PC-3 (cell line): ENCODE measurements at regions of chrX and their contacts with region 1.

Region 1: GRCh38 chrX:135484641-135485289 is 35.7 kb upstream of the INTS6L start:
- DNase-seq: peak; percentile 55
- ATAC-seq: peak; percentile 60
- H3K4me3 ChIP-seq: no peak overlapping the region
- H3K27ac ChIP-seq: no peak overlapping the region
- H3K4me1 ChIP-seq: no peaks in the 10 kb centered on the region
- H3K27me3 ChIP-seq: peaks cover 17% of the 10 kb centered on the region
- CTCF ChIP-seq: peak; percentile 67

Region 2: GRCh38 chrX:135373357-135373756 is 111.4 kb before region 1 on chrX:
- CTCF ChIA-PET with region 1: no interaction called
- POLR2A ChIA-PET with region 1: no interaction called
- intact Hi-C with region 1: no loop called
- DNase-seq: no peak
- ATAC-seq: no peak
- H3K4me3 ChIP-seq: no peak overlapping the region
- H3K27ac ChIP-seq: no peak overlapping the region
- H3K4me1 ChIP-seq: no peaks in the 10 kb centered on the region
- H3K27me3 ChIP-seq: no peaks in the 10 kb centered on the region
- CTCF ChIP-seq: no peak

Region 3: GRCh38 chrX:135521405-135522189 is 36.8 kb after region 1 on chrX:
- CTCF ChIA-PET with region 1: no interaction called
- POLR2A ChIA-PET with region 1: no interaction called
- intact Hi-C with region 1: loop called (anchors 5 kb)
- DNase-seq: peak; percentile 81
- ATAC-seq: peak; percentile 83
- H3K4me3 ChIP-seq: peak overlapping the region; percentile 84
- H3K27ac ChIP-seq: peak overlapping the region; percentile 27
- H3K4me1 ChIP-seq: peaks cover 8% of the 10 kb centered on the region
- H3K27me3 ChIP-seq: no peaks in the 10 kb centered on the region
- CTCF ChIP-seq: no peak

Region 4: GRCh38 chrX:135572436-135572835 is 87.7 kb after region 1 on chrX:
- CTCF ChIA-PET with region 1: no interaction called
- POLR2A ChIA-PET with region 1: no interaction called
- intact Hi-C with region 1: loop called (anchors 1 kb)
- DNase-seq: no peak
- ATAC-seq: no peak
- H3K4me3 ChIP-seq: no peak overlapping the region
- H3K27ac ChIP-seq: no peak overlapping the region
- H3K4me1 ChIP-seq: no peaks in the 10 kb centered on the region
- H3K27me3 ChIP-seq: no peaks in the 10 kb centered on the region
- CTCF ChIP-seq: peak; percentile 64

Region 5: GRCh38 chrX:135596495-135596894 is 111.7 kb after region 1 on chrX:
- CTCF ChIA-PET with region 1: interaction called, 4 read pairs
- POLR2A ChIA-PET with region 1: no interaction called
- intact Hi-C with region 1: loop called (anchors 1 kb)
- DNase-seq: peak; percentile 58
- ATAC-seq: peak; percentile 80
- H3K4me3 ChIP-seq: no peak overlapping the region
- H3K27ac ChIP-seq: no peak overlapping the region
- H3K4me1 ChIP-seq: no peaks in the 10 kb centered on the region
- H3K27me3 ChIP-seq: no peaks in the 10 kb centered on the region
- CTCF ChIP-seq: peak; percentile 72

Region 6: DNA sequence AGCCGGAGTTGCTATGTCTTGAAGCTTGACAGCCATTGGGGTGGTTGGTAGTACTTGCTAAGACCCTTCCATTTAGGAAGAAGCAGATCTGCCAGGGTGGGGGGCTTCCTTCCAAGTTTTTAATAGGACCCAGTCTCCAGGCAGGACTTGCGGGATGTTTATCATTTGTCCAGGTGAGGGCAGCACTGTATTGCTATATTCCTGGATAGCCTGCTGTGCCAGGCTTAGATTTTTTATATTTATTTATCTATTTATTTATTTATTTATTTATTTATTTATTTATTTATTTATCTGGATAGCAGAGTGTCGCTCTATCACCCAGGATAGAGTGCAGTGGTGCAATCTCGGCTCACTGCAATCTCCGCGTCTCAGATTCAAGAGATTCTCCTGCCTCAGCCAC is 141.2 kb after region 1 on chrX:
- CTCF ChIA-PET with region 1: no interaction called
- POLR2A ChIA-PET with region 1: no interaction called
- intact Hi-C with region 1: loop called (anchors 1 kb)
- DNase-seq: peak; percentile 39
- ATAC-seq: peak; percentile 49; the same call in 1 of the 2 replicates
- H3K4me3 ChIP-seq: no peak overlapping the region
- H3K27ac ChIP-seq: no peak overlapping the region
- H3K4me1 ChIP-seq: no peaks in the 10 kb centered on the region
- H3K27me3 ChIP-seq: no peaks in the 10 kb centered on the region
- CTCF ChIP-seq: peak; percentile 37; the same call in 1 of the 2 replicates